SK-N-SH (cell line): ENCODE measurements at regions of chr11 and their contacts with region 1.

Region 1: GRCh38 chr11:66638177-66639065 is at the start of gene RBM4:
- DNase-seq: peak; percentile 95
- H3K4me3 ChIP-seq: peak within 1 kb of the TSS; percentile 75 to 97
- H3K27ac ChIP-seq: peak within 1 kb of the TSS; percentile 88 to 94
- H3K4me1 ChIP-seq: peaks cover 42 to 43% of the 10 kb centered on the region in 2 experiments
- H3K27me3 ChIP-seq: no peaks in the 10 kb centered on the region
- CTCF ChIP-seq: peak; percentile 28
- EP300 ChIP-seq: no peak; a peak in 1 of 4 replicates
- RAD21 ChIP-seq: no peak
- polyA plus RNA-seq, gene RBM4: 202 and 222 TPM in 2 replicates

Region 2: DNA sequence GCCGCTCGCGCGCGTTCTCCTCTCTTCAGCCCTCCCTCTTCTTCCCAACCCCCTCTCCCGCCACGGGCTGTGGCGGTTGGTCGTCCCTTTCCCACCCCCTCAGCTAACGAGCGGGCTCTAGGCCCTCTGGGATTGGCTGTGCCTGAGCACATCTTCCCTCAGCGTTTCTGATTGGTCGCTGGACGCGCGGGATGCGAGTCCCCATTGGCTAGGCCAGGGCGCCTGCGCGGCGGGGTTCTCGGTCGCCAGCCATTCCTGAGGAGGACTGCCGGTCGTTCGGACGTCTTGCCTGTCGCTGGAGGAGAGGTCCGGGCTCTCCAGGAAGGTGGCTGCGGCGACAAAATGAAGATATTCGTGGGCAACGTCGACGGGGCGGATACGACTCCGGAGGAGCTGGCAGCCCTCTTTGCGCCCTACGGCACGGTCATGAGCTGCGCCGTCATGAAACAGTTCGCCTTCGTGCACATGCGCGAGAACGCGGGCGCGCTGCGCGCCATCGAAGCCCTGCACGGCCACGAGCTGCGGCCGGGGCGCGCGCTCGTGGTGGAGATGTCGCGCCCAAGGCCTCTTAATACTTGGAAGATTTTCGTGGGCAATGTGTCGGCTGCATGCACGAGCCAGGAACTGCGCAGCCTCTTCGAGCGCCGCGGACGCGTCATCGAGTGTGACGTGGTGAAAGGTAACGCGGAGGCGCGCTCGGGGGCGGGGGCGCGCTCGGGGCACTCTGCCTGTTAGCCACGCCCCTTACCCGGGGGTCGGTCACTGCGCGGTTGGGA is 21.9 kb before region 1 on chr11 and contains the start of gene RBM14:
- CTCF ChIA-PET with region 1: interaction called, 4 read pairs
- POLR2A ChIA-PET with region 1: interaction called, 18 read pairs
- DNase-seq: peak; percentile 99
- H3K4me3 ChIP-seq: peak within 1 kb of the TSS; percentile 73 to 75
- H3K27ac ChIP-seq: peak within 1 kb of the TSS; percentile 87 to 91
- H3K4me1 ChIP-seq: peaks cover 8 to 11% of the 10 kb centered on the region in 2 experiments; a peak in 3 of 4 replicates
- H3K27me3 ChIP-seq: no peaks in the 10 kb centered on the region
- CTCF ChIP-seq: no peak
- EP300 ChIP-seq: no peak
- RAD21 ChIP-seq: no peak
- polyA plus RNA-seq, gene RBM14: 17.6 and 19.8 TPM in 2 replicates

Region 3: DNA sequence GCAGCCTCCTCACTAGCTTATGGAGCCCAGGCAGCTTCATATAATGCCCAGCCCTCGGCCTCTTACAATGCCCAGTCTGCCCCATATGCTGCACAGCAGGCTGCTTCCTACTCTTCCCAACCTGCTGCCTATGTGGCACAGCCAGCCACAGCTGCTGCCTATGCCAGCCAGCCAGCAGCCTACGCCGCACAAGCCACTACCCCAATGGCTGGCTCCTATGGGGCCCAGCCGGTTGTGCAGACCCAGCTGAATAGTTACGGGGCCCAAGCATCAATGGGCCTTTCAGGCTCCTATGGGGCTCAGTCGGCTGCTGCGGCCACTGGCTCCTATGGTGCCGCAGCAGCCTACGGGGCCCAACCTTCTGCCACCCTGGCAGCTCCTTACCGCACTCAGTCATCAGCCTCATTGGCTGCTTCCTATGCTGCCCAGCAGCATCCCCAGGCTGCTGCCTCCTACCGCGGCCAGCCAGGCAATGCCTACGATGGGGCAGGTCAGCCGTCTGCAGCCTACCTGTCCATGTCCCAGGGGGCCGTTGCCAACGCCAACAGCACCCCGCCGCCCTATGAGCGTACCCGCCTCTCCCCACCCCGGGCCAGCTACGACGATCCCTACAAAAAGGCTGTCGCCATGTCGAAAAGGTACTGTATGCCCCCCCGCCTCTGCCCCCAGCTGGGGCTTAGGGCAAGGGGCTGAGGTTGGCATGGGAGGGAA is 13.2 kb before region 1 on chr11:
- CTCF ChIA-PET with region 1: interaction called, 4 read pairs
- POLR2A ChIA-PET with region 1: interaction called, 13 read pairs
- DNase-seq: no peak
- H3K4me3 ChIP-seq: no peak overlapping the region
- H3K27ac ChIP-seq: no peak overlapping the region
- H3K4me1 ChIP-seq: no peaks in the 10 kb centered on the region; a peak in 1 of 4 replicates
- H3K27me3 ChIP-seq: no peaks in the 10 kb centered on the region
- CTCF ChIP-seq: no peak
- EP300 ChIP-seq: no peak
- RAD21 ChIP-seq: no peak

Region 4: DNA sequence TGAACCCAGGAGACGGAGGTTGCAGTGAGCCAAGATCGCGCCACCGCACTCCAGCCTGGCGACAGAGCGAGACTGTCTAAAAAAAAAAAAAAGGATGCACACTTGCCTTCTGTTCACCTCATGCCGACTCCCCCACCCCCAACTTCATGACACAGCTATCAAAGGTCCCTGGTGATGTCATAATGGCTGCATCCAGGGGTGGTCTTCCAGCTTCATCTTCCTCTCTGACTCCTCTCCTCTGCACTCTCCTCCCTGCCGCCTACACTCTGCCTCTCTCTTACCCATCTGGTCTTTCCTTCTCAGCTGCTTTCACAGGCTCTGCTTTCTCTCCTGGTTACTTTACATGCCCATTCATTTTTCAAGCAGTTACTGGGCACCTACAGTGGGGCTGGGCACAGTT is 464.2 kb after region 1 on chr11:
- CTCF ChIA-PET with region 1: no interaction called
- POLR2A ChIA-PET with region 1: no interaction called
- DNase-seq: no peak
- H3K4me3 ChIP-seq: no peak overlapping the region
- H3K27ac ChIP-seq: no peak overlapping the region
- H3K4me1 ChIP-seq: no peaks in the 10 kb centered on the region; a peak in 1 of 4 replicates
- H3K27me3 ChIP-seq: no peaks in the 10 kb centered on the region
- CTCF ChIP-seq: no peak
- EP300 ChIP-seq: no peak
- RAD21 ChIP-seq: no peak